H1 (cell line): ENCODE measurements at regions of chr18 and their contacts with region 1.

Region 1: GRCh38 chr18:3983351-3983969 is 471.6 kb downstream of the DLGAP1 start:
- DNase-seq: no peak
- H3K4me3 ChIP-seq: no peak overlapping the region
- H3K27ac ChIP-seq: no peak overlapping the region
- H3K4me1 ChIP-seq: peaks cover 0 to 10% (median 6%) of the 10 kb centered on the region in 4 experiments; a peak in 4 of 7 replicates
- H3K27me3 ChIP-seq: no peaks in the 10 kb centered on the region
- CTCF ChIP-seq: no peak
- EP300 ChIP-seq: no peak
- POLR2A ChIP-seq: no peak
- RAD21 ChIP-seq: no peak

Region 2: GRCh38 chr18:3995476-3996102 is 12.1 kb after region 1 on chr18:
- CTCF ChIA-PET with region 1: interaction called, 26 read pairs
- POLR2A ChIA-PET with region 1: no interaction called
- DNase-seq: peak in 1 of 2 experiments; percentile 69
- H3K4me3 ChIP-seq: no peak overlapping the region
- H3K27ac ChIP-seq: no peak overlapping the region
- H3K4me1 ChIP-seq: peaks cover 0 to 7% (median 3%) of the 10 kb centered on the region in 4 experiments; a peak in 4 of 7 replicates
- H3K27me3 ChIP-seq: no peaks in the 10 kb centered on the region
- CTCF ChIP-seq: peak; percentile 21 to 66 (median 66)
- EP300 ChIP-seq: no peak
- POLR2A ChIP-seq: no peak
- RAD21 ChIP-seq: peak; percentile 72 to 76